ENCODE measurements at regions of chr5 and their contacts with region 1.

Region 1: DNA sequence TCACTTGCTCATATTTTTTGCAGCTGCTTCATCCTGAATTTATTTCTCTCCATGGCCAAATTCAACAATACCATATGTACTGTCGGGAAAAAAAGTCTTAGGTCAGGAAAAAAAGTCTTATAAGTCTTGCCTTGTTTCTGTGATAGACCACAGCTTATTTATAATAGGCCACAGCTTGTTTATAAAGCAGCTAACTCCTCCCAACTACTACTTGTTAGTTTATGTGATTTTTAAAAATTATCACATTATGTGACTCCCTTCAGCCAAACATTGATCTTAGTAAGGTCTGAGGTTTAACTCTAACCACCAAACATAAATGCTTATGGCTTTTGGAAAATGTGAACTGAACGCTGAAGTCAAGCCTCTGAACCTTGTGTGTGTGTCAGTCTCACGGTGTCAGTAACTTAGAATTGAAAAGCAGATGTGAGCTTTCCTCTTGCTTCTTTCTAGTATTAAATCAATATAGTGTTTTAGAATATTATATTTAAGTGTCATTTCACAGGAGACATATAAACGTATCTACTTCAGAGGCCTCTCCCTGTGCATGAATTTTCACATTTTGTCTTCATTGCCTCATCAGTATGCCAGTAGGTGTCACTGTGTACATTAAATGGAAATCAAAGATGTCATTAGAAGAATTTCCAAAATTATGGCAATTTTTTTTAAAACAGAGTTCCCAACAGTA is 51.3 kb downstream of the SNX24 start:
- DNase-seq: no peak
- ATAC-seq: no peak
- H3K4me3 ChIP-seq: no peak overlapping the region
- H3K27ac ChIP-seq: no peak overlapping the region
- H3K4me1 ChIP-seq: peaks cover 0 to 8% (median 0%) of the 10 kb centered on the region in 12 donors
- H3K27me3 ChIP-seq: no peaks in the 10 kb centered on the region
- CTCF ChIP-seq: peak; percentile 48 to 79 (median 64)
- POLR2A ChIP-seq: no peak

Region 2: DNA sequence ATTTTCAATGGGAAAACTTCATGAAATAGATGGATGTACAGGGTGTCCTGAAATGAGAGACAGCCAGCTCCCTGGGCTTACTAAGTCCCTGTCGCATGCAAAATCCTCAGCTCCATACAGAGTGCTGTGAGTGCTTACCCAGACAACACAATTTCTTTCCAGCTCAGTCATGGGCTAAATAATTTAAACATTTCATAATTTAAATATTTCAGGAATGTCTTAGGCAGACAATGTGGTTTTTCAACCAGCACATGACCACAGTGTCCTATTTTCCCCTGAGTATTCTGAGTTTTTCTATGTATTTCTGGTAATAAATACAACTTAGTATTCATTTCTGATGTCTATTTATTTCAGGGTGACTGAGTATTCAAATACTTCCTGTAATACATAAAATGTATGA is 310.4 kb before region 1 on chr5:
- intact Hi-C with region 1: no loop called
- DNase-seq: no peak
- ATAC-seq: no peak
- H3K4me3 ChIP-seq: no peak overlapping the region
- H3K27ac ChIP-seq: no peak overlapping the region
- H3K4me1 ChIP-seq: no peaks in the 10 kb centered on the region
- H3K27me3 ChIP-seq: peaks cover 0 to 8% (median 0%) of the 10 kb centered on the region in 9 donors
- CTCF ChIP-seq: no peak
- POLR2A ChIP-seq: no peak

Region 3: DNA sequence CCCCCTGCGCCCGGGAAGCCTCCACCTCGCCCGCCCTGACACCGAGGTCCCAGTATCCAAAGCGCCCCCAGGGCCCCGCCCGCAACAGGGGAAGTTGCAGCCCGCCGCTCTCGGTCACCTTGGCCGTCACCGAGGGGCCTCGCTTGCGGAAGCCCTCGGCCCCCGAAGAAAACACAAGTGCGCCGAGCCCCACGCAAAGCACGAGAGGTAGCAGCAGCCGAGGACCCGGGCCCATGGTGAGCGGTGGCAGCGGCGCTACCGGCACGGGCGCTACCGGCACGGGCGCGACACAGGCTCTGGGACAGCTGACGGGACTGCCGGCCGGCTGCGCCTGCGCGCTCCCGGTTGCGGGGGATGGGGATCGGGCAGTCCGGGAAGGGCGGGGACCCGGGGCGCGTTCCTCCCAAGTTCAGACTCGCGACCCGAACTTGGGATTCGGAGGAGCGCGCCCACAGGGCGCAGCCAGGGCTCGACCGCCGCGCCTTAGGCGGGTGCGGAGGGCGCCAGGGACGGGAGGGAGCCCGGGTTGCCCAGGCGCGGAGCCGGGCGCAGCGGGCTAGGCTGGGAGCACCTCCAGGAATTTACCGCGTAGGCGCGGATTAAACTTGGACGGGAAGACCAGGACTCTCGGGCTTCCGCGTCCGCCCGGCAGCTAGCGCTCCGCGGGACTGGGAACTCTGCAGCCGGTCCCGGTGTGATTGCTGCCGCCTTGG is 139.8 kb after region 1 on chr5 and contains the start of gene PPIC:
- intact Hi-C with region 1: loop called in 1 of 10 experiments (anchors 10 kb)
- DNase-seq: peak; percentile 91 to 94 (median 93)
- ATAC-seq: peak; percentile 92 to 97 (median 96)
- H3K4me3 ChIP-seq: peak within 1 kb of the TSS; percentile 68 to 96 (median 83)
- H3K27ac ChIP-seq: peak within 1 kb of the TSS; percentile 91 to 98 (median 95)
- H3K4me1 ChIP-seq: peaks cover 0 to 51% (median 28%) of the 10 kb centered on the region in 12 donors
- H3K27me3 ChIP-seq: peaks cover 0 to 17% (median 0%) of the 10 kb centered on the region in 9 donors
- CTCF ChIP-seq: peak in 1 of 12 donors; percentile 10
- POLR2A ChIP-seq: peak in 1 of 2 donors; percentile 91
- total RNA-seq, gene PPIC: 37.9 to 50.8 (median 43.1) TPM

Region 4: DNA sequence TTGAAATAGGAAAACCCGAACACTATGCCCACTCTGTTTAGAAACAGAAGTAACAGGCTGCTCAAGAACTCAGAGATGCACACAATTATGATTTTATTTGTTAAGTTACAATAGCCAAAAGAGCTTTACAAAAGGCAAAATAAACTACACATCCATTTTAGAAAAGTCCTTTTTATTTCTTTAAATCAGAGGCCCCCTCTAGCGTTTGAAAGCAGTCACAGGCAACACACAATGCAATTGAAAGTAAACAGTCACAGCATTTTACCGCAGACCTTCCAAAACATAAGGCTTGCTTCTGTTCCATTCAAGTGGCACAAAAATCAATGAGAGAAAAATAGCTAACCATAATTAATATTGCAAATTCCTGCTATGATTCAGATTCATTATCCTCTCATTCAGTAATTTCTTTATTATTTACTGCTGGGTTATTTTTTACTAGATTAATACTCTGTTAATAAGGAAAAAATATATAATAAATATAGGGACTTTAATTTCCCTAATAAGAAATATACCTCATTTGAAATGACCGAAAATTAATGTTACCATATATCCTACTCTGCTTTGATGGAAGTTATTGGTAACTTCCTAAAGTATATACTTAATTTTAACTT is 448.2 kb after region 1 on chr5:
- intact Hi-C with region 1: loop called in 9 of 10 experiments (anchors 2 to 10 kb)
- DNase-seq: no peak
- ATAC-seq: no peak
- H3K4me3 ChIP-seq: no peak overlapping the region
- H3K27ac ChIP-seq: no peak overlapping the region
- H3K4me1 ChIP-seq: no peaks in the 10 kb centered on the region
- H3K27me3 ChIP-seq: no peaks in the 10 kb centered on the region
- CTCF ChIP-seq: peak; percentile 36 to 73 (median 64)
- POLR2A ChIP-seq: no peak

Region 5: DNA sequence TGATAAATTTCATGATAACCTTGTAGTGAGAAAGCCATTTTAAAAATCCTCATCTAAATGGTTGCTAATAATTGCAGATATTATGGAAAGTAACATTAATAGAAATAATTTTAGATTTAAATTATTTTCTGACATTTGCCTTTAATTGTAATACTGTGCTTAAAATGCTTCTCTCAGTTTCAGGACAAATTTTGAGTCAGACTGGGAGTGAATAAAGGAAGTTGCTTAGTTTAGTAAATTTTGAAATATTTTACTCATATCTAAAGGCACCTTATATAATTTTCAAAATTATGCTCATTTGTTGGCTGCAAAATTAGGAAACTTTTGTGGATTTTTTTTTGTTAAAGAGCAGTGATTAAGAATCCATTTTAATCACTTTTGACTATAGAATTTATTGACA is 709.1 kb after region 1 on chr5:
- intact Hi-C with region 1: loop called in 2 of 10 experiments (anchors 5 kb)
- DNase-seq: no peak
- ATAC-seq: no peak
- H3K4me3 ChIP-seq: no peak overlapping the region
- H3K27ac ChIP-seq: no peak overlapping the region
- H3K4me1 ChIP-seq: peaks cover 0 to 5% (median 0%) of the 10 kb centered on the region in 12 donors
- H3K27me3 ChIP-seq: no peaks in the 10 kb centered on the region
- CTCF ChIP-seq: no peak
- POLR2A ChIP-seq: no peak

Measured in heart left ventricle (tissue), 16 donors.